Activated naive CD4-positive, alpha-beta T cell treated with anti-CD3 and anti-CD28 coated beads for 36 hours (primary cell): ENCODE measurements at regions of chr9 and their contacts with region 1.

Region 1: DNA sequence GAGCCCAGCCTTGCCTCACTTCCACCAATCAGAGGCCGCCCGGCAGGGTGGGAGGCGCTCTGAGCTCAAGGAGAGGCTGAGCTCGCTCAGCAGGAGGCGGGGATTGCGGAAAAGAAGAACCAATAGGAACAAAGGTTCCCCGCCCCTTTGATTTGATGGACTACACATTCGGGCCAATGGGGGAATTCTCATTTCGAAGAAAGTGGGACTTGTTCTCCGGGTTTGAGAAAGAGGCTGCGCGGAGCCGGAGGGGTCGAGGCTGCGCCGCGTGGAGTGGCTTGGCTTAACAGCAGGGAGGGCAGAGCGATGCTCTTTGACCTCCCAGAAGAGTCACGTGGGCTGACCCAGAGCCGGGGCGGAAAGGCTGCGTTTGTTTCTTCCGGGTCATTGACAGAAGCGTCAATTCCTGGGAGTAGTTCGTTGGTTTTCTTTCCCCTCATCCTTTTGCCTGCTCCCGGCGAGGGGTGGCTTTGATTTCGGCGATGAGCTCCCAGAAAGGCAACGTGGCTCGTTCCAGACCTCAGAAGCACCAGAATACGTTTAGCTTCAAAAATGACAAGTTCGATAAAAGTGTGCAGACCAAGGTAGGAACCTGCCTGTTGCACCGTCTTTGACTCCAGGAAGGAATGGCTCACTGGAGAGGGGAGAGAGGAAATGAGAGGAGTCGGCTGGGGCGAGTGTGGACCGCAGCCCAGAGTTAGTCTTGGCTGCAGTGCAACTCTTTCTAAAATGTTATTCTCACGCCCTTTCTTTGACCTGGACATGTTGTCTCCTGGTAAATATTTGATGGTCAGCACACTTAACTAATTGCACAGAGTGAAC is at the start of gene C9orf85:
- DNase-seq: peak; percentile 97
- H3K4me3 Mint-ChIP-seq: peak within 1 kb of the TSS; percentile 99
- H3K27ac Mint-ChIP-seq: peak within 1 kb of the TSS; percentile 92
- H3K4me1 Mint-ChIP-seq: peaks cover 55% of the 10 kb centered on the region
- H3K27me3 Mint-ChIP-seq: no peaks in the 10 kb centered on the region
- total RNA-seq, gene C9orf85: 6.2 to 6.7 TPM

Region 2: DNA sequence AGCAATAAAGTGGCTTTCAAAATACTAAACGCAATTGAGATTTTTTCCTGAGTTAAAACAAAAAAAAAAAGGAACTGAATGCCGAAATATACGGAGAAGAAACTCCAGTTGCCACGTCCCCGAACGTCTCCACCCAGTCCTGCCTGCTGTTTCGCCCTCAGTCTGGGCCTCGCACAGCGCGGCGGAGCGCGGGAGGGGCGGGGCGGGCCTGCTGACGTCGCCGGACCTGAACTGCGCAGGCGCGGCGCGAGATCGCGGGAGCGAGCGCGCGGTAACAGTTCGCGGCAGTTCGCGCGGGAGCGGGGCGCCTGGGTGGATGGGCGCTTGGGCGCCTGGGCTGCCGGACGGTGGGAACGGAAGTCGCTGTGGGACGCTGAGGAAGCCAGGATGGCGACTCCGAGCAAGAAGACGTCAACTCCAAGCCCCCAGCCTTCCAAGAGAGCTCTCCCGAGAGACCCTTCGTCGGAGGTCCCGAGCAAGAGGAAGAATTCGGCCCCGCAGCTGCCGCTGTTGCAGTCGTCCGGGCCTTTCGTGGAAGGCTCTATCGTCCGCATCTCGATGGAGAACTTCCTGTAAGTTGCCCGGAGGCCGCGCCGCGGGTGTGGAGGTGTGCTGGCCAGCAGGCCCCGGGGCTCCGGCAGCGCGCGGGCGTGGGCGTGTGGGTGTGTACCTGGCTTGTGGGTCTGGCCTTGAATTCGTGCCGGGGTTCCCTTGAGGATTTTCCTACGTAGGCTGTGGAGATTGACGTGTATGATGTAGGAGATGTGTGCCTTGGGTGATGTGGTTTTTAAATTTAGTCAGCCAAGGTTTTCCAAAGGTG is 1652.6 kb before region 1 on chr9 and contains the start of gene SMC5:
- CTCF ChIA-PET with region 1: no interaction called
- intact Hi-C with region 1: loop called (anchors 10 kb)
- DNase-seq: peak; percentile 85
- H3K4me3 Mint-ChIP-seq: peak within 1 kb of the TSS; percentile 92
- H3K27ac Mint-ChIP-seq: peak within 1 kb of the TSS; percentile 96
- H3K4me1 Mint-ChIP-seq: peaks cover 61% of the 10 kb centered on the region
- H3K27me3 Mint-ChIP-seq: no peaks in the 10 kb centered on the region
- total RNA-seq, gene SMC5: 30.4 to 31.2 TPM

Region 3: GRCh38 chr9:71490810-71491209 is 420.7 kb before region 1 on chr9:
- CTCF ChIA-PET with region 1: no interaction called
- intact Hi-C with region 1: no loop called
- DNase-seq: peak; percentile 5
- H3K4me3 Mint-ChIP-seq: no peak overlapping the region
- H3K27ac Mint-ChIP-seq: no peak overlapping the region
- H3K4me1 Mint-ChIP-seq: no peaks in the 10 kb centered on the region
- H3K27me3 Mint-ChIP-seq: peaks cover 25% of the 10 kb centered on the region

Region 4: GRCh38 chr9:71783120-71783530 is 128.3 kb before region 1 on chr9:
- CTCF ChIA-PET with region 1: interaction called, 3 read pairs
- intact Hi-C with region 1: loop called (anchors 1 kb)
- DNase-seq: peak; percentile 95
- H3K4me3 Mint-ChIP-seq: peak overlapping the region; percentile 67
- H3K27ac Mint-ChIP-seq: peak overlapping the region; percentile 92
- H3K4me1 Mint-ChIP-seq: peaks cover 47% of the 10 kb centered on the region
- H3K27me3 Mint-ChIP-seq: no peaks in the 10 kb centered on the region

Region 5: DNA sequence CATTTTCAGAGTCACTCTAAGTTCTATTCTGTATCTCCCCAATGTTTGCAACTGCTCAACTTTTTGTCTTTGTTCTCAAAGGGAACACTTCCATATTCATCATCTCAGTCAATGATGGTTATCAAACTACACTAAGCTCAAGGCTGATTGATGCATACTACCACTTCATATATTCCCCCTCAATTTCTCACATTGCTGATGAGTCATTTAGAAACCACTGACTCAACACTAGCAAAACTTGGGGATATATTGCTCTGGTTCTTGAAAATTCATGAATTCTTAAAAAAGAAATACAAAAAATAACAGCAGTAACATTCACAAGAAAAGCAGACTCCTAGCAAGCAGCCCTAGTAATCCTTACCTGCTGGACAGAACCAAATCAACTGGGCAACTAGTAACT is 52.7 kb before region 1 on chr9:
- CTCF ChIA-PET with region 1: no interaction called
- intact Hi-C with region 1: loop called (anchors 2 kb)
- DNase-seq: no peak
- H3K4me3 Mint-ChIP-seq: no peak overlapping the region
- H3K27ac Mint-ChIP-seq: peak overlapping the region; percentile 47
- H3K4me1 Mint-ChIP-seq: peaks cover 18% of the 10 kb centered on the region
- H3K27me3 Mint-ChIP-seq: no peaks in the 10 kb centered on the region

Region 6: DNA sequence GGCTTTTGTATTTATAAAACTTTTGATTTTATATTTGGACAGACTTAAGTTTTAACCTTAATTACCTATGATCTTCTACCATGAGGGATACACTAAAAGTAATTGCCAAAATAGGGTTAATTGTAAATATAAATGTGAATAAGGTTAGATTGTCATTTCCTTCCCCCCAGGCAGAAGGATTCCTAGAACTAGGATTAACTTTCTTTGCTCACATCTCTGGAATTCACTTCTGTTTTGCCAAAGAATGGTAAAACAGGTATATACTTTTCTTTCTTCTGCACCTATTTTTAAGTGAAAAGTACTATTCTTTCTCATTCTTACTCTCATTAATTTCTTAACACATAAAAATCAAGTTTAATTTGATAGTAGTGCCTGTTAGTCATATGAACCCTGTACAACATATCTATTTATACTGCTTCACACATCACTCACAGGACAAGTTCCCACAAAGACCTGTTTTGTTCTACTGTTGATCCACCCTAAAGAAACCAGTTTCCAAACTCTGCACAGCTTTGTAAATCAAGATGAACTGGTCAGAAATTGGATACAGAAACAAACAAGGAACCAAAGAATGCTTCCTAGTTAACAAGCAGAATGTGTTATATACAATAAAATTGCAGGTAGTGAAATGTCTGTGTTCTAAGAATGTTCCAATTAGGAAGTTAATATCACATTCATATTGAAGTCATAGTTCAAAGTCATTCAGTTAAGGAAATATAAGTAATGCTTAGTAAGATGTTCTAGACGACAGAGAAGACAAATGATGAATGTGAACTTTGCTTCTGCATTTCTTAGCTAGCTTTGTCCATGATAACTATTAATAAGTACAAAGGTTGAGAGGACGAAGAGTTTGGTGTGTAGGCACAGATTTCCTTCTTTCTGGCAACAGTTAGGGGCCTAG is 33.3 kb after region 1 on chr9:
- CTCF ChIA-PET with region 1: no interaction called
- intact Hi-C with region 1: no loop called
- DNase-seq: no peak
- H3K4me3 Mint-ChIP-seq: no peak overlapping the region
- H3K27ac Mint-ChIP-seq: no peak overlapping the region
- H3K4me1 Mint-ChIP-seq: peaks cover 2% of the 10 kb centered on the region
- H3K27me3 Mint-ChIP-seq: no peaks in the 10 kb centered on the region

Region 7: GRCh38 chr9:71955300-71955915 is 43.9 kb after region 1 on chr9:
- CTCF ChIA-PET with region 1: no interaction called
- intact Hi-C with region 1: no loop called
- DNase-seq: no peak
- H3K4me3 Mint-ChIP-seq: no peak overlapping the region
- H3K27ac Mint-ChIP-seq: no peak overlapping the region
- H3K4me1 Mint-ChIP-seq: no peaks in the 10 kb centered on the region
- H3K27me3 Mint-ChIP-seq: no peaks in the 10 kb centered on the region

Region 8: DNA sequence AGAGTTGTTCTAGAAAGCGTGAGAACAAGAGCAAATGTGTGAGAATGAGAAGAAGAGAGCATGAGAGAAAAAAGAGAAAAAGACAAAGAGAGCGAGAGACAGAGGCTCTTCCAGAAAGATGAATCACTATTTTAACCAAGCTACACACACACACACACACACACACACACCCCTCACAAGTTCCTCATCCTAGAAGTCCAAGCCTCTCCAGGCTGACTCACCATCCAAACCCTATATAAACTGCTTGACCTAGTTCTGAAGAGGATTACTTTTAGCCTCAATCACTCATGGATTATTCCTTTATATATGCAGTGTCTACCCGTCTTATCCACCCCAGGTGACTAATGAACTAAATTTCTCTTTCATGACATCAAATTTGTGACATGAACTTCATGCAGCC is 111.4 kb after region 1 on chr9:
- CTCF ChIA-PET with region 1: interaction called, 4 read pairs
- intact Hi-C with region 1: loop called (anchors 2 kb)
- DNase-seq: no peak
- H3K4me3 Mint-ChIP-seq: no peak overlapping the region
- H3K27ac Mint-ChIP-seq: no peak overlapping the region
- H3K4me1 Mint-ChIP-seq: no peaks in the 10 kb centered on the region
- H3K27me3 Mint-ChIP-seq: no peaks in the 10 kb centered on the region

Region 9: GRCh38 chr9:72060513-72060912 is 149.0 kb after region 1 on chr9 and contains the start of gene C9orf57:
- CTCF ChIA-PET with region 1: no interaction called
- intact Hi-C with region 1: no loop called
- DNase-seq: no peak
- H3K4me3 Mint-ChIP-seq: no peak within 1 kb of the TSS
- H3K27ac Mint-ChIP-seq: no peak within 1 kb of the TSS
- H3K4me1 Mint-ChIP-seq: no peaks in the 10 kb centered on the region
- H3K27me3 Mint-ChIP-seq: peaks cover 11% of the 10 kb centered on the region
- total RNA-seq, gene C9orf57: not detected

Region 10: DNA sequence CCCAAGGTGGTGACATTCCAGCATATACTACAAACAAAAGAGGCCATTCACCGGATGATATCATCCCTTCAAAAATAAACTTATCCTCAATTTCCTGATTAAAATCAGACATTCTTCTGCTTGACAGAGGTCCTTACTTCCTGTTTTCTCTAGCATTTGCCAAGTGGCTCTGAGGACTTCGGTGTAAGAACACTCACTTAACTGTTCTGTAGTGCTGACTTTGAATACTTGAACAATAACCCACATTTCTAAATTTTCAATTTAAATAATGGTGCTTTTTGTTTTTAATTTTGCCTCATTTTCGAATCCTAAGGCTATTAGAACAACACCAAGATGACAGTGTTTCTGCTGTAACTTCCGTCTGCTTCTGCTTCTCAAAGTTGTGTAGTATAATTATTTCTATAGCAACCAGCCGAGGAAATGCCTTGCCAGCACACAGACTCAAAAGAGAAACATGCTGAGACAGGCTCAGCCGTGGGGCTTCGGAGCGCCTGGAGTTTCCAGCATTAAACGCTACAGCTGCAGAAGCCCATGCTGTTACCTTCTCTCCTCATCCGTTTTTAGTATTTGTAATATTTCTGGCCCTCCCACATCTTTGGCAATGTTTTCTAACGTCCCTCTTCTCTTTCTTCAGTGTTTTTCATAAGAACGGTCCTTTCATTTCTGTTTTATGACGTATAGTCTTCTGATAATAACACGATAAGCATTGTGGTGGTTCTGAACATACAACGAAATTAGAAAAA is 1220.7 kb after region 1 on chr9:
- CTCF ChIA-PET with region 1: no interaction called
- intact Hi-C with region 1: loop called (anchors 5 kb)
- DNase-seq: peak; percentile 76
- H3K4me3 Mint-ChIP-seq: peak overlapping the region; percentile 79
- H3K27ac Mint-ChIP-seq: peak overlapping the region; percentile 86
- H3K4me1 Mint-ChIP-seq: peaks cover 25% of the 10 kb centered on the region
- H3K27me3 Mint-ChIP-seq: no peaks in the 10 kb centered on the region